BJ (cell line): ENCODE measurements at regions of chr17 and their contacts with region 1.

Region 1: DNA sequence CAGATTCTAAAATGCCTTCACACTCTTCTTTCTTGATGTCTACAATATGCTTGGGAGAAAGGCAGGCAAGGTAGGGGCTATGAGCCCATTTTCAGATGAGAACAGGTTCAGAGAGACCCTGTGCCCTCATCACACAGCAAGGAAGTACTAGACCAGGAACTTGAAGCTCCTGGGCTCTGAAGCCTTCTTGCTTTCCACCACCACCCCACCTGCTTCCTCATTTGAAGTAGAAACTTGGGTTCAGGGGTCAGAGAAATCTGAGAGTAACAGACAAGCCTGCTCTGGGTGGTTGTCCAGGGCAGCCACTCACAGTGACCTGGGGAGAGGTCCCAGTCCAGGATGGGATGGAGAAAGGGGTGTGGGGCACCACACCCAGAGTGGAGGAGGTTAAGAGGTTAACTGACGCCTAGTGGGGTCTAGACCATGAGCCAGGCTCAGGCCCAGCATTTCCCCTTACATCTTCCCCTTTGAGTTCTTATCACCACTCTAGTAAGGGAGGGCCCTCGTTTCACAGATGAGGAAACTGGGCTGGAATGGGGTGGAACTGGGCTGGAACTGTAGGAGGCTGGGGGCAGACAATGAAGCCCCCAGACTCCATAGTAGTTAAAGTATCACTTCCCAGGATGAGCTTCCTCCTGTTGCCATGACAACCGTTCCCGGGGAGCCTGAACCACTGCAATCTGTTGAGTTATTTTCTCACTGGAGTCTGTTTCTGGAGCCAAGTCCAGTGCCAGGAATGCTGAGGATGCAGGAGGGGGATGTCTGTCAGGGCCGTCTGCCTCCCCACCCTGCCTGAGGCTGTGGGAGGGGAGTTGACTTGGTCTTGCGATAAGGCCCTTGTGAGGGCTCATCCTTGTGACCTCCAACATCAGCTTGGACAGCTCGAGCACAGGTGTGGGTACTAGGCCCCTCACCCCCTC is 16.2 kb upstream of the PHF12 start:
- DNase-seq: no peak
- H3K4me3 ChIP-seq: no peak overlapping the region
- H3K27me3 ChIP-seq: peaks cover 9% of the 10 kb centered on the region
- CTCF ChIP-seq: no peak

Region 2: DNA sequence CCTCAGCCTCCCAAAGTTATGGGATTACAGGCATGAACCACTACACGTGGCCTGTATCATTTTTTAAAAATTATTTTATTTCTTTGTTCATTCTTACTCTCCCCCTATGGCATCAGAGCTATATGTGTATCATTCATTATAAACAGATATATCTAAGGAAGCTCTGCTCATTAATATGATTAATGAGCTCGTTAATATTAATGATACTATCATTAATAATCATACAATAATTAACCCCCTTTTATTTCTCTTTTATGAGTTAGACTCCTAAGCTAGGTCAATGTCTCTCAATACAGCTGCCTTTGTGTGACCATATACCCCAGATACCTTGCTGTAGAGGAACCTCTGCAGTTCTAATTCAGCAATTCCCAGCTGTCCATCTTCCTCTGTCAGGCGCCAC is 349.0 kb before region 1 on chr17:
- CTCF ChIA-PET with region 1: no interaction called
- POLR2A ChIA-PET with region 1: interaction called, 19 read pairs
- DNase-seq: no peak
- H3K4me3 ChIP-seq: no peak overlapping the region
- H3K27me3 ChIP-seq: no peaks in the 10 kb centered on the region
- CTCF ChIP-seq: no peak

Region 3: GRCh38 chr17:28985950-28986713 is 18.7 kb after region 1 on chr17:
- CTCF ChIA-PET with region 1: interaction called, 10 read pairs
- POLR2A ChIA-PET with region 1: no interaction called
- DNase-seq: no peak
- H3K4me3 ChIP-seq: no peak overlapping the region
- H3K27me3 ChIP-seq: peaks cover 29% of the 10 kb centered on the region
- CTCF ChIP-seq: no peak

Region 4: GRCh38 chr17:29084541-29085146 is 117.2 kb after region 1 on chr17:
- CTCF ChIA-PET with region 1: interaction called, 20 read pairs
- POLR2A ChIA-PET with region 1: no interaction called
- DNase-seq: no peak
- H3K4me3 ChIP-seq: no peak overlapping the region
- H3K27me3 ChIP-seq: no peaks in the 10 kb centered on the region
- CTCF ChIP-seq: no peak

Region 5: GRCh38 chr17:29195465-29196081 is 228.1 kb after region 1 on chr17:
- CTCF ChIA-PET with region 1: no interaction called
- POLR2A ChIA-PET with region 1: no interaction called
- DNase-seq: no peak
- H3K4me3 ChIP-seq: no peak overlapping the region
- H3K27me3 ChIP-seq: no peaks in the 10 kb centered on the region
- CTCF ChIP-seq: no peak